ENCODE measurements at regions of chr11 and their contacts with region 1.

Region 1: DNA sequence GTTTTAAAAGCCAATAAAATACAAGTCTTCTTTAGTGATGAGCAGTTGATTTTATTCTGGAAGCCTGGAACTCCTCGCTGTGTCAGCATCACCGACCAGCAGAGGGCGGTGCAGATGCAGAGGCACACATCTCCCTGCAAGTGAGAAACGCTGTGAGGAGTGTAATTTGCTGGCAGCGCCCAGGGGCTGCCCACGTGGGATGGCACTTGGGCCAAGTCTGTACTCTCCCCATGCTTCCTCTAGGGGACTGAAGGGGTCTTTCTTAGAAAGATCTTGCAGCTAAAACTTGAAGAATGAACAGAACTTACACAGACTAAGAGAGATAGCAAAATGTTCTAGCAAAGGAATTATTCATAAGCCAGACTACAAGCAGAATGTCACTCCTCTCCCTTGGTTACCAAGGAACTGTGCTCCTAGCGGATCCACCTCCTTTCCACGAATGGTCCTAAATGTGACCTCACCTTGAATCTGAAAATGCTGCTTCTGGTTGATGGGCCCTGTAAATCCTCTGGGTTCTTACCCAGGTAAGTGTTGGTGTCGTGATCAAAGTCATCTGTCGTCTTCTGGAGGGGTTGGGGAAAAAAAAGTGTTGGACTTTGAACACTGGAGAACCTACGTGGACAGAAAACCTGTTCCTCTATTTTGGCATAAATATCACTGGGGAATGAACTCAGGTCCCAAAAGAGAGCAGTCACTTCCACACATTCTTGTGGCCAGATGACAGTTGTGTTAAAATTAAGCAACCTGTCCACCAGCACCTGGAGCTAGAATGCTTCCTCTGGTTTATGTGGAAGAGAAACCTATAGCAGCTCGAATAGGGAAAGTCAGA is 31.8 kb downstream of the CNTF start:
- DNase-seq: peak; percentile 80
- H3K4me3 Mint-ChIP-seq: no peak overlapping the region
- H3K27ac Mint-ChIP-seq: no peak overlapping the region
- H3K4me1 Mint-ChIP-seq: peaks cover 7% of the 10 kb centered on the region
- H3K27me3 Mint-ChIP-seq: no peaks in the 10 kb centered on the region
- CTCF ChIP-seq: peak; percentile 88

Region 2: GRCh38 chr11:58640386-58641023 is 13.8 kb before region 1 on chr11:
- CTCF ChIA-PET with region 1: interaction called, 18 read pairs
- POLR2A ChIA-PET with region 1: interaction called, 3 read pairs
- intact Hi-C with region 1: no loop called
- DNase-seq: no peak
- H3K4me3 Mint-ChIP-seq: no peak overlapping the region
- H3K27ac Mint-ChIP-seq: no peak overlapping the region
- H3K4me1 Mint-ChIP-seq: no peaks in the 10 kb centered on the region
- H3K27me3 Mint-ChIP-seq: no peaks in the 10 kb centered on the region
- CTCF ChIP-seq: no peak

Region 3: GRCh38 chr11:58688789-58689503 is 34.7 kb after region 1 on chr11:
- CTCF ChIA-PET with region 1: interaction called, 13 read pairs
- POLR2A ChIA-PET with region 1: no interaction called
- intact Hi-C with region 1: no loop called
- DNase-seq: peak; percentile 37
- H3K4me3 Mint-ChIP-seq: no peak overlapping the region
- H3K27ac Mint-ChIP-seq: no peak overlapping the region
- H3K4me1 Mint-ChIP-seq: peaks cover 9% of the 10 kb centered on the region
- H3K27me3 Mint-ChIP-seq: no peaks in the 10 kb centered on the region
- CTCF ChIP-seq: no peak

Region 4: DNA sequence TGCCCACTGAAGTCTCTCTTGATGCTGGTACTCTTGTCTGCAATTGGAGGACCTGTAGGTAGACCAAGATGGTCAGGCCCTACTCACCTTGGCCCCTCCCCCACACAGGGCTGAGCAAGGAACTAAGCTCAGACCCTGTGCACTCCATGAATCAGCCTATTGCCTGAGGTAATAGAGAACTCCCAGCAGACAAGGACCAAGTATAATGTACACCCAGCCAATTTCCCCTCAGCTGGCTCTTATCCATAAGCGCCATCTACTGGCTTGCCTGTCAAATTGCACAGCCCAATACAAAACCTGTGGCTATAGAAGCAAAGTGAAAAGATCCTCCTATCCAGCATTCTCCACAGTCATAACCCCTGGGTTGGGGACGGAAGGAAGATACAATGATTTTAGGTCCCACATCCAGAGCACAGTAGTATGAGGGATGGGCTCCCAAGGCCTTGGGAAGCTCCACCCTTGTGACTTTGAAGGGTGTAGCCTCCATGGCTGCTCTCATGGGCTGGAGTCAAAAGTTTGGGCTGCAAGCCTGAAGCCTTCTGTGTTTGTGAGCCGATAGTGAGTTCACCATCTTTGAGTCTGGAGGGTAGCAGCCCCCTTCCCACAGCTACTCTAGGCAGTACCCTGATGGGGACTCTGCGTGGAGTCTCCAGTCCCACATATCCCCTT is 134.2 kb after region 1 on chr11:
- CTCF ChIA-PET with region 1: interaction called, 115 read pairs
- POLR2A ChIA-PET with region 1: interaction called, 6 read pairs
- intact Hi-C with region 1: loop called (anchors 1 kb)
- DNase-seq: peak; percentile 78
- H3K4me3 Mint-ChIP-seq: no peak overlapping the region
- H3K27ac Mint-ChIP-seq: no peak overlapping the region
- H3K4me1 Mint-ChIP-seq: peaks cover 7% of the 10 kb centered on the region
- H3K27me3 Mint-ChIP-seq: no peaks in the 10 kb centered on the region
- CTCF ChIP-seq: peak; percentile 89

Region 5: DNA sequence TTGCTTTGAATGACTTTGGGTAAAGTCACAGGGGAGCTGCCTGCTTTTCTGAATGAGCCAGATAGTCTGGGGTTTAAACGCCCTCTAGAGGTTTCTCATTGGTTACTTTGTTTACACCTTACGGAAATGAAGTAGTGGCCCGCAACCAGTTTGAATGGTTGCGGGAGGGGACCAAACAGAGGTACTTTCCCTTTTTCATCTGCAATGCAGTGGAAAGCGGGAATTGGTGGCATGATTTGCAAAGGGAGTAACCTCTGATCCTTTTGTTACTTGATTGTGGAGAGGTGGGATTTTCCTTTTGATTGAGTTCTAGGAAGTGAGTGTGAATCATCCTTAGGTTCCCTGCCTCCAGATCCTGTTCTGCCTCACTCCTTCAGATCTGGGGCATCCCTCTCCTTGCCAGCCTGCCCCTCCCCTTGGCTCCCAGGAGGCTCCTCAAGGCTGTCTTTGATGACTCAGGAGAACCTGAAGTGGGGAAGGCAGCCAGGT is 269.1 kb after region 1 on chr11:
- CTCF ChIA-PET with region 1: interaction called, 3 read pairs
- POLR2A ChIA-PET with region 1: no interaction called
- intact Hi-C with region 1: loop called (anchors 5 kb)
- DNase-seq: peak; percentile 84
- H3K4me3 Mint-ChIP-seq: peak overlapping the region; percentile 49
- H3K27ac Mint-ChIP-seq: peak overlapping the region; percentile 46
- H3K4me1 Mint-ChIP-seq: peaks cover 14% of the 10 kb centered on the region
- H3K27me3 Mint-ChIP-seq: no peaks in the 10 kb centered on the region
- CTCF ChIP-seq: no peak

Region 6: GRCh38 chr11:58992489-58992888 is 338.2 kb after region 1 on chr11:
- CTCF ChIA-PET with region 1: no interaction called
- POLR2A ChIA-PET with region 1: no interaction called
- intact Hi-C with region 1: no loop called
- DNase-seq: no peak
- H3K4me3 Mint-ChIP-seq: no peak overlapping the region
- H3K27ac Mint-ChIP-seq: no peak overlapping the region
- H3K4me1 Mint-ChIP-seq: no peaks in the 10 kb centered on the region
- H3K27me3 Mint-ChIP-seq: peaks cover 53% of the 10 kb centered on the region
- CTCF ChIP-seq: no peak

Region 7: GRCh38 chr11:59135648-59136461 is 481.6 kb after region 1 on chr11:
- CTCF ChIA-PET with region 1: interaction called, 12 read pairs
- POLR2A ChIA-PET with region 1: no interaction called
- intact Hi-C with region 1: no loop called
- DNase-seq: peak; percentile 73
- H3K4me3 Mint-ChIP-seq: no peak overlapping the region
- H3K27ac Mint-ChIP-seq: peak overlapping the region; percentile 24
- H3K4me1 Mint-ChIP-seq: peaks cover 6% of the 10 kb centered on the region
- H3K27me3 Mint-ChIP-seq: no peaks in the 10 kb centered on the region
- CTCF ChIP-seq: peak; percentile 98

Measured in MCF 10A (cell line).